ENCODE measurements at regions of chr10 and their contacts with region 1.

Region 1: DNA sequence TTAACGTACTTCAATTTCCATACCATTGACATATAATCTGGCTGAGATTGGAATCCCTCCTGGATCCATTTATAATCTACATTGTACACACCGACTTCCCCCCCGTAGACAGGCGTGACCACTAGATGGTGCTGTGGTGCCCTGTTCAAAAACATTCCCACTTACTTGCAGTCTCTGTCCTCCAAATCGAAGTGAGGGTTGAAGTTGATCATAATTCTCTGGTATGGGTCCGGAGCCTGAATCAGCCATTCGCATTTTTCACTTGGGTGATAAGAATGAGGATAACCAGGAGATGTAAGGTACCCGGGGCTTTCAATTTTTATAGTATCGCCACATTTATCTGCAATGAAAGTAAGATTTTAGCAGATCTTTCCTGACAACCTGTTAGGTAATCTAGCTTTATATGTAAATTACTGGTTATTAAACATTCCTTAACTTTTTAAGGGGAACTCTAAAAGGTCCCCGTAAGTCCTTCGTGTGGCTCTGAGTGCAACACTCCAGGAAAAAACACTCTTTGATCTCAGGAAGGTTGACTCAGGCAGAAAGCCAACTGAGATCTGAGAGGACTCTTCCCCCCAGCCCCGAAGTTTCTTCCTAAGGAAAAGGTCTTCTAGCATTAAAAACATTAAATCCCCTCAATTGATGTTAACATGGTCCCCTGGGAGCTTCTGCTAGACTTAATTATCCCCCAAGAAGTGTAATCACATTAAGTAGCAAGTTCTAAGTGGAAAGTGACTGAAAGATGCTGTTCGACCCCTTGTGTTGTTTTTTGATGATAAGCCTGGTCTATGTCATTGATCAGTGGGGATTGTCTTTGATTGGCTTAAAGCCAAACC is 3.7 kb downstream of the NRP1 start:
- DNase-seq: peak; percentile 100
- ATAC-seq: peak; percentile 21
- H3K4me3 ChIP-seq: peak overlapping the region; percentile 69
- H3K27ac ChIP-seq: peak overlapping the region; percentile 86
- H3K4me1 ChIP-seq: peaks cover 46% of the 10 kb centered on the region
- H3K27me3 ChIP-seq: no peaks in the 10 kb centered on the region
- CTCF ChIP-seq: peak; percentile 100

Region 2: DNA sequence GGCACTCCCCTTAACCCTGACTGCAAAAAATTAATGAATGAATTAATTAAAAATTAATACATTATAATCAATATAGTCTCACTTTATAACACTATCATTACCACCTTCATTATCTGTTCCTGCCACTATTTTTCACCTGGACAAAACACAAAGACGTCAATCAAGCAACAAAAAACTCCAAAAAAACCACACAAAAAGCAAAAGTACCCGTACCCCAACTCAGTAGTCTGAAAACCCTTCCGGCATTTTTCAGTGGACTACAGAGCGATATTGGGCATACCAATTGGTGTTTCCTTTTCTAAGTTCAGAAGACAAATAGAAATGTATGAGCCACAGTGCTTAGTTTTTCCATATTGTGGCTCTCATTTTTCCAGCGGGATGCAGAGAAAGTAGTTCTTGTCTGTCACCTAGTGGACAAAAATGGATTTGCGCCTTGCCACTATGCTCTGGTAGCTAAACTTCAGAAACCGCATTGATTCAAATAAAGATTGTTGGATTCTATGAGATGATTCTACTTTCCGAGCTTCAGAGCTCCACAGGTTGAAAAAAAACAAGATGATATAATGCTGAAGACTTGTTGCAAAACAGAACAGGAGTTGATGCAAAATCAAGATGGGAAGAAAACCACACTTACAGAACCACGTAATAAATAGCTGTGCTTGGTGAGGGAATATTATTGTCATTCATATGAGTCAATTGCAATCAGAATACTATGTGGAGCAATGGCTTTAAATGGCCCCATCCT is 322.1 kb before region 1 on chr10:
- CTCF ChIA-PET with region 1: no interaction called
- POLR2A ChIA-PET with region 1: no interaction called
- intact Hi-C with region 1: loop called (anchors 2 kb)
- DNase-seq: peak; percentile 100
- ATAC-seq: peak; percentile 12
- H3K4me3 ChIP-seq: peak overlapping the region; percentile 29
- H3K27ac ChIP-seq: peak overlapping the region; percentile 66
- H3K4me1 ChIP-seq: peaks cover 63% of the 10 kb centered on the region
- H3K27me3 ChIP-seq: no peaks in the 10 kb centered on the region
- CTCF ChIP-seq: peak; percentile 100

Region 3: GRCh38 chr10:33265621-33266020 is 65.1 kb before region 1 on chr10:
- CTCF ChIA-PET with region 1: no interaction called
- POLR2A ChIA-PET with region 1: no interaction called
- intact Hi-C with region 1: loop called (anchors 2 kb)
- DNase-seq: no peak
- ATAC-seq: no peak
- H3K4me3 ChIP-seq: no peak overlapping the region
- H3K27ac ChIP-seq: peak overlapping the region; percentile 65
- H3K4me1 ChIP-seq: peaks cover 55% of the 10 kb centered on the region
- H3K27me3 ChIP-seq: no peaks in the 10 kb centered on the region
- CTCF ChIP-seq: no peak

Region 4: DNA sequence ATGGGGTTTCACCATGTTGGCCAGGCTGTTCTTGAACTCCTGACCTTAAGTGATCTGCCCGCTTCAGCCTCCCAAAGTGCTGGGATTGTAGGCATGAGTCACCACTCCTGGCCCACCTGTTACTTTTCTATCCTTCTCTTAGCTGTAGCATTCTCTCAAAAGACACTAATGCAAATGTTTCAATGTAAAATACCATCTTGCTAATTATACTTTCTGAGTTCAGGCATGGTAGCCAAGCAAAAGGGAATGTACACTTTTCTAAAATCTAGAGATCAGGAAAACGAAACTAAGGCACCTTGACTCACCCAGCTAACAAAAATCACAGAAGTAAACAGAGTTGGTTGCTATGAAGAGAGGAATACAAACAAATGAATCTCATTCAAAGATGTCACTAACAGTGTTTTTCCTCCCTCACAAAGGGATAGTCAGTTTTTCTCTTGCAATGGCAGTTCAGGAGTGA is 404.7 kb after region 1 on chr10:
- CTCF ChIA-PET with region 1: interaction called, 3 read pairs
- POLR2A ChIA-PET with region 1: no interaction called
- intact Hi-C with region 1: loop called (anchors 5 kb)
- DNase-seq: peak; percentile 82
- ATAC-seq: peak; percentile 80
- H3K4me3 ChIP-seq: no peak overlapping the region
- H3K27ac ChIP-seq: peak overlapping the region; percentile 36
- H3K4me1 ChIP-seq: peaks cover 14% of the 10 kb centered on the region
- H3K27me3 ChIP-seq: no peaks in the 10 kb centered on the region
- CTCF ChIP-seq: no peak

Region 5: DNA sequence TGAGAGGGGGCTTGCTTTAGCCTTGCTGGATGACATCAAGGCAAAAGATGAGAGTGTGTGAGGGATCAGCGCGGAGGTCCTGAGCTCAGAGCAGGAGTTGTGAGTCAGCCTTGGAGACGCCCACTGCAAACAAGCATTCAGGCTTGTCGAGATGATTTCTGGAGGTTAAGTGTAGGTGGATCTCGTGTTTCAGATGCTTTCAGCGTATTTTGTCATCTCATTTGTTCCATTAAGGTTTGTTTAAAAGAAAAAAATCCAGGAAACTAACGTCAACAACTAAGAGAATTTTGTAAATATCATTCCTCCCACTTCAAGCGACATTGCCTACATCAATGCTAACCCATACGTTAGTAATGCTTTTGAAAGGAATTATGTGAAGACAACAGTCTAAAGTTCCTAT is 719.1 kb after region 1 on chr10:
- CTCF ChIA-PET with region 1: no interaction called
- POLR2A ChIA-PET with region 1: interaction called, 25 read pairs
- intact Hi-C with region 1: no loop called
- DNase-seq: peak; percentile 61
- ATAC-seq: peak; percentile 64
- H3K4me3 ChIP-seq: no peak overlapping the region
- H3K27ac ChIP-seq: no peak overlapping the region
- H3K4me1 ChIP-seq: peaks cover 13% of the 10 kb centered on the region; the same call in 1 of the 2 replicates
- H3K27me3 ChIP-seq: no peaks in the 10 kb centered on the region
- CTCF ChIP-seq: no peak

Region 6: GRCh38 chr10:34198953-34199352 is 868.2 kb after region 1 on chr10:
- CTCF ChIA-PET with region 1: no interaction called
- POLR2A ChIA-PET with region 1: no interaction called
- intact Hi-C with region 1: loop called (anchors 1 kb)
- DNase-seq: peak; percentile 34
- ATAC-seq: no peak; the same call in 1 of the 2 replicates
- H3K4me3 ChIP-seq: no peak overlapping the region
- H3K27ac ChIP-seq: no peak overlapping the region
- H3K4me1 ChIP-seq: peaks cover 6% of the 10 kb centered on the region
- H3K27me3 ChIP-seq: no peaks in the 10 kb centered on the region
- CTCF ChIP-seq: no peak

Region 7: GRCh38 chr10:34528320-34528719 is 1197.6 kb after region 1 on chr10:
- CTCF ChIA-PET with region 1: no interaction called
- POLR2A ChIA-PET with region 1: interaction called, 4 read pairs
- intact Hi-C with region 1: loop called (anchors 2 kb)
- DNase-seq: peak; percentile 100
- ATAC-seq: peak; percentile 75
- H3K4me3 ChIP-seq: peak overlapping the region; percentile 23
- H3K27ac ChIP-seq: peak overlapping the region; percentile 85
- H3K4me1 ChIP-seq: peaks cover 55% of the 10 kb centered on the region
- H3K27me3 ChIP-seq: no peaks in the 10 kb centered on the region
- CTCF ChIP-seq: no peak

Measured in PC-3 (cell line).